ENCODE measurements at regions of chr7 and their contacts with region 1.

Region 1: DNA sequence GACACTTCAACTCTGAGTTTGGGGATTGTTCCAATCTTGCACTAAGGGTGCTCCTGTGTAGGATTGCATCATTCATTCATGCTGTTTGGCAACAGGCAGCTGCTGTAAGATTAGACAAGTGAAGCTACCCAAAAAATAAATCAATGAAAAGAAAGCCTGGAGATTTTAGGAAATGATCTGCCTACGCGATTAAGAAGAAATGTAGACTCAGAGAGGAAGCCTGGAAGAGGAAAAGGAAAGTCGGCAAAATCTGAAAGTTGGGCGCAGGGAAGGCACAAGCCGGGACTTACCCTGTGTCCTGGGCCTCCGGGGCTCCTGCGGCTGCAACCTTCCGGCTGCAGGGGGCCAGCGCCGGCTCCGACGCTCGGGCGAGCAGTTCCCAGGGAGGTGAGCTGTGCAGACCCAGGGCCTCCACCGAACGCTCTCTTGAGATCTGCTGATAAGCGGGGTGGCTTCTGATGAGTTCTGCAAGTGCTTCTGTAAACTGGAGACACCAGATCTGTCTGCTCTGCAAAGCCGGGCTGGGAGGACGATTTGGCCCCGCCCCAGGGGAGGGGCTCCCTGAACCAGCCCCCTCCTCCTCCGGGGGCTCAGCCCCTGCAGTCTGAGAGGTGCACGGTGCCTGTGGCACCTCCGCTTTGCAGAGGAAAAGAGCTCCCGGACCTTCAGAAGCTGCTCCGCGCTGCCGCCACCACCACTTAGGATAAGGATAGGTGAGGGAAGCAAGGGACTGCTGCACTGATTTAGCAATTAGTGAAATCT is 17.4 kb downstream of the PSPH start:
- DNase-seq: no peak
- H3K4me3 ChIP-seq: peak overlapping the region; percentile 73
- CTCF ChIP-seq: peak; percentile 54

Region 2: DNA sequence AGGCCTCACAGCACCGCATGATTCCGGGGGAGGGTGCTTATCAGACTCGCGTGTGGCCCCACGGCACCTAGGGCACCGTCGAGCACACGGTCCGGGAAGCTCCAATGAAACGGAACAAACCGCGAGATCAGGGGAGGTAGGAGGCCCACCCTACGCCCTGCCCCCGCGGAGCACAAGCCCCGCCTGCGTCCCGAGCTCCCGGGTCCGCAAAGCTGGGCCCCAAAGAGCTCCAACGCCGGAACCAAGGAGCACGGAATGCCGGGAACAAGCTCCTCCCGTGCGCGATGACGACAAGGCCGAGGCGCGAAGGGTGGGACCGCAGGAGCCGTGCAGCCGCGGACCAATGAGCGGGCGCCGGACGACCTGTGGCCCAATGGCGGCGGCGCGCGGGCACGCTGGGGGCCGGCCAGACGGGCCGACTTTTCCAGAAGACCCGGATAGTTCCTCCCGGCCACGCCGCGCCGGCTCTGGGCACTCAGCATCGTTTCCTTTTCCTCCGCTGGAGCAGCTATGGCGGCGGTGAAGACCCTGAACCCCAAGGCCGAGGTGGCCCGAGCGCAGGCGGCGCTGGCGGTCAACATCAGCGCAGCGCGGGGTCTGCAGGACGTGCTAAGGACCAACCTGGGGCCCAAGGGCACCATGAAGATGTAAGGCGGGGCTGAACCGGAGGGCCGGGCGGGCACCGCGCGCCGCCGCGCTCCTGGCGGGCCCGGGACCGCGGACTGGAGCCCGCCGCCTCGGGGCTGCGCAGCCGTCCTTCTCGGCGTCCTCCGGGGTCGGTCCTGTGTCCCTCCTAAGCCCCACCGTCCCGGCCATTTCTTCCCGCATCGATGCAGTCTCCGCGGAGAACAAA is 17.7 kb after region 1 on chr7 and contains the starts of genes CCT6A and PSPH:
- CTCF ChIA-PET with region 1: interaction called, 4 read pairs
- POLR2A ChIA-PET with region 1: interaction called, 14 read pairs
- DNase-seq: peak; percentile 86
- H3K4me3 ChIP-seq: peak within 1 kb of the TSS; percentile 93
- CTCF ChIP-seq: no peak

Measured in AG04449 (cell line).